ENCODE measurements at regions of chr2 and their contacts with region 1.

Region 1: DNA sequence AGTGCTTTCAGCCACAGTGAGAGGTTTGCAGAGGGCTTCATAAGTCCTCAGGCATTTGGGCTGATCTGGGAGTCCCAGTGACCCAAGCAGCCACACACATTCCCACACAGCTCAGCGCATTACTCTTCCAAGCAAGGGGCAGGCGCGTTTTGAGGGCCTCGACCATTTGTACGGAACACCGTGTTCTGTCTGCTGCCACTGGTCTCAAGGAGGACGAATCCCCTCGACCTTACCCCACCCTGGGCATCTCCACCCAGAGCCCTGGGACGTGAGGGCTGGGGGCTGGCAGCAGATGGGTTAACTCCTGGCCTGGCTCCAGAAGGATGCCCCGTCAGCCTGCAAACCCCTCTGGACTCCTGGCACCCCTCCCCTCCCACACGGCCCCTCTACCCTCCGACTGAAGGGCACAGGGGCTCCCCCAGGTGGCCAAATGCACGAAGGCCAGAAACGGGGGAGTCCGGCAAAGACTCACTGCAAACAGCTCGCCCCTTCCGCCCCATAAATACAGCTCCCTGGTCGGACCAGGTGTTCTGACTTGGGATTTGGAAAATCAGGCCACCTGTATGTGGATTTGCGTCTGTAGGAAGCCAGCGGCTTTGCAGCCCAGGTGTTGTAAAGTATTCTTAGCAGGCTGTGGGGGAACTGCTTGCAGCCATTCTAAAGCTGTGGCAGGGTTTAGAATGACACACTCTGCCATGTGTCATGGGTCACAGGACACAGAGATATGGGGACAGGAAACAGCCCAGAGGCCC is 33.6 kb upstream of the PTMA start:
- DNase-seq: peak in 5 of 6 donors; percentile 54 to 86 (median 79)
- ATAC-seq: peak; percentile 69 to 76 (median 72)
- H3K4me3 ChIP-seq: no peak overlapping the region
- H3K27ac ChIP-seq: no peak overlapping the region
- H3K4me1 ChIP-seq: peaks cover 0 to 6% (median 0%) of the 10 kb centered on the region in 3 donors
- H3K27me3 ChIP-seq: no peaks in the 10 kb centered on the region
- CTCF ChIP-seq: peak; percentile 50 to 72 (median 70)

Region 2: DNA sequence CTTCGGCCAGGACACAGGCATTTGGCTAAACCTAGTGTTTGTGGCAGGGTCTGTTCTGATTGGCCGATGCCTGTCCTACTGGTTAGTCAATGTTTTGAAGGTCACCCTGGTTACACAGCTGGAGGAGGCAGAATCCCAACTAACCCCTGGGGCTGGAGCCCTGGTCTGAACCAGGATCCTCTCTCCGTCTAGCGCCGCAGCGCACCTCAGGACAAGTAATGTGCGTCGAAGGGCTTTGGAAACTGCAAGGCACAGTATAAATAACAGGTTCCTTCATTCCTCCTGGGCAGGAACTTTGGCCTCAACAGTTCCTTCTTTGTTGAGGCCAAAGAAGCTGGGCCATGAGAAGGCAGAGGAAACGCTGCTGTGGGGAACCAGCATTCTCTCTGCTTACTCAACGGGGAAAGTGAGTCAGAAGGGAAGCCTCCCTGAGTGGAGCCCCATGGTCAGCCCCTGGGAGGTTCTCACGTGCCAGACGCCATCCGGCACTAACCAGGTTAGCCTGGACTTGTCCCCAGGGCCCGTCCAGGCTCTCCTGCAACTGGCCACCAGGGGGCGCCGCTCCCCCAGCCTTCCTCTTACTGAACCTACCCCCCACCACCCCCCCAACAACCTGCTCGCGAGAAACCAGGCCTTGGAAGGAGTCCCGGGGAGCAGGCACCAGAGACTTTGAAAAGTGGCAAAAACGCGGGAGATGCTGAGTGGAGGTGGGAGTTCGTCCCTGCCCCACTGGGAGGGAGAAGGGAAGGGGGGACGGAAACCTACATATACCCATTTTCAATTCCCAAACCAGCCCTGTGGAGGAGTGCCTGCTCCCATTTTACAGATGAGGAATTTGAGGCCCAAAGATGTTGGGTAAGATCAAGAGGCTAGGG is 62.3 kb before region 1 on chr2:
- intact Hi-C with region 1: loop called in 2 of 3 experiments (anchors 5 kb)
- DNase-seq: peak; percentile 83 to 95 (median 90)
- ATAC-seq: peak; percentile 73 to 81 (median 78)
- H3K4me3 ChIP-seq: no peak overlapping the region
- H3K27ac ChIP-seq: peak overlapping the region; percentile 71 to 94 (median 86)
- H3K4me1 ChIP-seq: peaks cover 19 to 20% (median 20%) of the 10 kb centered on the region in 3 donors
- H3K27me3 ChIP-seq: no peaks in the 10 kb centered on the region
- CTCF ChIP-seq: peak; percentile 87 to 92 (median 90)

Region 3: DNA sequence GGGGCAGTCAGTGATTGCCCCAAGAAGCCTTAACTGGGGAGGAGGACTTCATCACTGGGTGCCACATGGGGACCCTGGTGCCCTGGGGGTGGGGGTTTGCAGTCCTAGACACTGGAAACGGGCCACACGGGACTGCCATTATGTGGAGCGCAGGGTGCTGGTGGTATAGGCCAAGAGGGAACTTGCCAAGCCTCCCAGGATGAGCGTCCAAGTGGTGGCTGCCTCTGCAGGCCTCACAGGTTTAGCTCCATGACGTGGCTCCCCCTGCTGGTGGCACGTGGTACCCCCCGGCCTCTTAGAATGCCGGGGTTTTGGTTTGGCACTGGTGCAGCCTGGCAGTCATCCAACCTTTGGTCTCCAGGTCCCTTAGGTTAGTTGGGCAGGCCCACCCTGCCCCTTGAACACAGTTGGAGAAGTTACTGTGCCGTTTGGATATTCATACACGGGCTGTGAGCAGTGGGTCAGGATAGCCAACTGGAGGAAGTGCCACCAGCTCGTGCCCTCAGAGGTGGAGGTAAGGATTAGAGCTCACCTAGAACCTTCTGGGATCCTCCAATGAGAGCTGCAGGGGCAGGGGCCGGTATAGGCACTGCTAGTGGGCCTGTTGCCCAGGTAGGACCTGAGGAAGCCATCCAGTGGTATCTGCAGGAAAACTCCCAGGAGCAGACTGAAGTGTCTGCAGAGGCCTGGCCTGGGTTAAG is 39.1 kb after region 1 on chr2:
- intact Hi-C with region 1: loop called in 2 of 3 experiments (anchors 2 kb)
- DNase-seq: peak; percentile 85 to 96 (median 94)
- ATAC-seq: peak; percentile 28 to 65 (median 56)
- H3K4me3 ChIP-seq: no peak overlapping the region
- H3K27ac ChIP-seq: peak overlapping the region in 2 of 4 donors; percentile 13 to 47
- H3K4me1 ChIP-seq: peaks cover 0 to 14% (median 10%) of the 10 kb centered on the region in 3 donors
- H3K27me3 ChIP-seq: no peaks in the 10 kb centered on the region
- CTCF ChIP-seq: peak; percentile 89 to 94 (median 89)

Region 4: DNA sequence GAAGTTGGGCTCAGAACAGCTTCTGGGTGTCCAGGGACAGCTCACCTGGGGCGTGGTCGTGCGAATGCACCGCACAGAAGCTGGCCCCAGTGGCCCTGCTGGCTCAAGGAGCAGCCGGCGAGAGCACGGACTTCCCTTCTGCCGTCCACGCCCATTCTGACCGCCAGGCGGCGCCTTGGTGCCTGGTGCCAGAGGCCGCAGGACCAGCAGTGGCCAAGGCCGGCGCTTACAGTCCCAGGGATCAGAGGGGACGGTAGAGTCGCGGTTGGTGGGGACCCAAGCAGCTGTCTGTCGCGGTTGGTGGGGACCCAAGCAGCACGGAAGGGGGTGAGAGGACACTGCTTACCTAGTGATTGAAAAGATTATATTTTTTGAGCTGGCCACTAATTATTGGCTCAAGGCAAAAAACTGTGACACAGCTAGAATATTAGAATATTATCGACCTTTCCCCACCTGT is 225.8 kb after region 1 on chr2:
- intact Hi-C with region 1: no loop called
- DNase-seq: peak; percentile 68 to 98 (median 87)
- ATAC-seq: peak; percentile 94 to 100 (median 98)
- H3K4me3 ChIP-seq: no peak overlapping the region
- H3K27ac ChIP-seq: no peak overlapping the region
- H3K4me1 ChIP-seq: no peaks in the 10 kb centered on the region
- H3K27me3 ChIP-seq: no peaks in the 10 kb centered on the region
- CTCF ChIP-seq: peak; percentile 79 to 81 (median 80)

Region 5: DNA sequence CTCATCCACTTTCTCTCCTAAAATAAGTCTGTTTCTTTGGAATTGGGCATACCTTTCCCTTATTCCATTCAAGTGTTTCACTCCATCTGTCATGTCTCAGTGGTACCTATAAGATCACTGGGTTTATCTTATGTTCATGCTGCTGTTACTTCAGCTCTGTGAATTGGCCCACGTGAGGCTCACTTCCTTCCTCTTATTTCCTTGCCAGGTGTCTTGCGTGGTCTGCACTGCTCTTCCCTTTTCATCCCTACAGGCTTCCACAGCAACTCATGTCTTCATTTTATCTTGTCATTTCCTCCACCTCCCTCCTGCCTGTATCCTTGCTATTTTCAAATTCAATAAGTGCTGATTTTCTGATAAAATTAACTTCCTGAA is 544.7 kb after region 1 on chr2:
- intact Hi-C with region 1: no loop called
- DNase-seq: no peak
- ATAC-seq: no peak
- H3K4me3 ChIP-seq: no peak overlapping the region
- H3K27ac ChIP-seq: no peak overlapping the region
- H3K4me1 ChIP-seq: no peaks in the 10 kb centered on the region
- H3K27me3 ChIP-seq: no peaks in the 10 kb centered on the region
- CTCF ChIP-seq: no peak

Measured in pancreas (tissue), 10 donors.